Activated CD8-positive, alpha-beta T cell treated with anti-CD3 and anti-CD28 coated beads for 36 hours (primary cell): ENCODE measurements at regions of chr5 and their contacts with region 1.

Region 1: DNA sequence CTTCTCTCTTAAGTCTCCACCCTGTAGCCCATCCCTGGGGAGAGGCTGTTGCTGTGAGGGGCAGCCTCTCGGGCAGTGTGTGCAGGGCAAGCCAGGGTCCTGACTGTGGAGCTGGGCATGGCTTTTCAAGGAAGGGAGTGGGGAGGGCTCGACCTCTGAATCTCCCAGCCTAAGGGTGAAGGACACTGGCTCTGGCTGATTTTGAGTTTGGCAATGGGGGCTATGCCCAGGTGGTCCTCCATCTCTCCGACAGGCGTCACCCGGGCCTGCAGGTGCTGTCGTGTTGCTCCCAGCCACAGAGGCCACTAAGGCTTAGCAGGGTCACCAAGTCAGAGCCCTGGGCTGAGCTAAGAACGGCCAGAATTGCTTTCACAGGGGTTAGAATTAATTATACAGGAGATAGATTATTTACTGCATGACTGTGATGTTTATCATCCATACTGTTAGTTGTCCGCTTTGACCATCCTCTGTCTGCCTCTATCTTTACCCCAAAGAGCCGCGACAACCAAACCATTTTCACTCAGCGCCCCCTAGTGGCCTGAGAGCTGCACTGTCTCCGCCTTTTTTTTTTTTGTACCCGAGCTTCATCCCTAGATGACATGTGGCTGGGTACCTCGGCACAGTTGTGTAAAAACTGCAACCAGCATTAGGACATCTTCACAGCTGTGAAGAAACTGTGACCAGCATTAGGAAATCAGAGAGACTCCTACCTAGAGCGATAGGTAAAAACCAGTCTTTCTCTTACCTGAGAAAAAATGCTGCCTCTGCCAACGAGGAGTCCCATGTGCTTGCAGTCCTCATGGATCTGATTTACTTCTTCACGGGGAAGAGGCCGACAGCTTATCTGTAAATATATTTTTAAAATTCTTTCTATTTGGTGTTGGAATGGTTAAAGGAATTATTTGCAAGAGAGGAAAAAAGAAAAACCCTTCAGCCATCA is 44.5 kb downstream of the AGXT2 start:
- DNase-seq: peak; percentile 73
- ATAC-seq: peak; percentile 77
- H3K4me3 Mint-ChIP-seq: no peak overlapping the region
- H3K27ac Mint-ChIP-seq: no peak overlapping the region
- H3K4me1 Mint-ChIP-seq: no peaks in the 10 kb centered on the region
- H3K27me3 Mint-ChIP-seq: peaks cover 21% of the 10 kb centered on the region
- CTCF ChIP-seq: peak; percentile 92

Region 2: DNA sequence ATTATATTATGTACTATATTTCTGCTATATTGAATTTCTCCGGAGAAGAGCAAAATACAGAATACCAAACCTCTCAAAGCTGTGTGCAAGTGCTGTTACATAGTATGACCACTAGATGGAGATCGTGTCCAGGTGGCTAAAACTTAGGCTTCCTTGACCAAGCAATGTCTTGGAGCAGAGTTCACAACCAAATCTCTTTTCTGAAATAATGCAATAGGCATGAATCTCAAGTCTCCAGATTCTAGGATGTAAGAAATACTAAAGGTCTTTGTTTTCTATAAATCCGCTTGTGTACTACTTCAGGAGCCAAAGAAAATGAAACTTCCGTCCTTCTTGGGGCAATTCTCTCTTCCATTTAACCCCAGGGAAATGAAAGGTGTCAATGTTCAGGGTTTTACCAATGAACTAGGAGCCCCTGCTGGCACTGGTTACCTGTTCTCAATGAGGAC is 528.7 kb before region 1 on chr5:
- CTCF ChIA-PET with region 1: interaction called, 15 read pairs
- POLR2A ChIA-PET with region 1: no interaction called
- intact Hi-C with region 1: no loop called
- DNase-seq: no peak
- ATAC-seq: peak; percentile 79
- H3K4me3 Mint-ChIP-seq: no peak overlapping the region
- H3K27ac Mint-ChIP-seq: no peak overlapping the region
- H3K4me1 Mint-ChIP-seq: no peaks in the 10 kb centered on the region
- H3K27me3 Mint-ChIP-seq: peaks cover 7% of the 10 kb centered on the region
- CTCF ChIP-seq: peak; percentile 92

Region 3: GRCh38 chr5:34499001-34499734 is 504.1 kb before region 1 on chr5:
- CTCF ChIA-PET with region 1: no interaction called
- POLR2A ChIA-PET with region 1: no interaction called
- intact Hi-C with region 1: loop called (anchors 10 kb)
- DNase-seq: peak; percentile 38
- ATAC-seq: peak; percentile 96
- H3K4me3 Mint-ChIP-seq: no peak overlapping the region
- H3K27ac Mint-ChIP-seq: peak overlapping the region; percentile 63
- H3K4me1 Mint-ChIP-seq: peaks cover 12% of the 10 kb centered on the region
- H3K27me3 Mint-ChIP-seq: peaks cover 11% of the 10 kb centered on the region
- CTCF ChIP-seq: no peak

Region 4: GRCh38 chr5:34789021-34789531 is 214.2 kb before region 1 on chr5:
- CTCF ChIA-PET with region 1: no interaction called
- POLR2A ChIA-PET with region 1: no interaction called
- intact Hi-C with region 1: no loop called
- DNase-seq: no peak
- ATAC-seq: no peak
- H3K4me3 Mint-ChIP-seq: no peak overlapping the region
- H3K27ac Mint-ChIP-seq: no peak overlapping the region
- H3K4me1 Mint-ChIP-seq: no peaks in the 10 kb centered on the region
- H3K27me3 Mint-ChIP-seq: peaks cover 4% of the 10 kb centered on the region
- CTCF ChIP-seq: no peak

Region 5: DNA sequence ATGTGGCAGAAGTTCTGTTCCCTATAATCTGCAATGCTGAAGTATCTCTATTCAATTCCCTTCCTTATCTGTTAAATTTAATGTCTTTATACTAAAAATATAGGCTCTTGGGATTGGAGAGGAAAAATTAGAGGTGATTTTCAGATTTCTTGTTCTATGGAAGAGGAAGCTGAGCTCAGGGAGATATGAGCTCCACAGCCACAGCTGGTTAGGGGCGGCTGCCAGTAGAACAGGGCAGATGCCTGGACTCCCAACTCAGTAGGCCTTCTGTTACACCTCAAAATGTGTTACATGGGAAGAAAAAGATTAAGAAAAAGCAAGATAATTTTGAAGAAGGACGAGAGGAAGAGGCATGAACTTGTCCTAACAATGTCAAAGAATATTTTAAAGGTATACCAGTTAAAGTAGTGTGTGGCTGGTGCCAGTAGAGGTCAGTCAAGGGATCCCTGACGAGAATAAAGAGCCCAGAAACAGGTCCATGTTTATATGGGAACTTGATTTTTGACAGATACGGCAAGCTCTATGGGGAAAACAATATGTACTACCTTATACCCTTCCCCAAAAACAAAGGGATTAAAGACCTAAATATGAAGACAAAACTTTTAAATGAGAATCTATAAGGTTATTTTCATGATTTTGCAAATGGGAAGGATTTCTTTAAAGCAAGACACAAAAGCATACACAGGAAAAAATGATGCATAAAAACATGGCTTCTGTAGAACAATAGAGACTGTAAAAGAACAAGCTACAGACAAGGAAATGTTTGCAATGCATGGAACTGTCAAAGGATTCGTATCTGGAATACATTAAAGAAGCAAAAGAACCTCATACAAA is 45.2 kb before region 1 on chr5:
- CTCF ChIA-PET with region 1: interaction called, 41 read pairs
- POLR2A ChIA-PET with region 1: no interaction called
- intact Hi-C with region 1: loop called (anchors 5 kb)
- DNase-seq: peak; percentile 25
- ATAC-seq: peak; percentile 55
- H3K4me3 Mint-ChIP-seq: no peak overlapping the region
- H3K27ac Mint-ChIP-seq: no peak overlapping the region
- H3K4me1 Mint-ChIP-seq: peaks cover 17% of the 10 kb centered on the region
- H3K27me3 Mint-ChIP-seq: no peaks in the 10 kb centered on the region
- CTCF ChIP-seq: peak; percentile 55

Region 6: DNA sequence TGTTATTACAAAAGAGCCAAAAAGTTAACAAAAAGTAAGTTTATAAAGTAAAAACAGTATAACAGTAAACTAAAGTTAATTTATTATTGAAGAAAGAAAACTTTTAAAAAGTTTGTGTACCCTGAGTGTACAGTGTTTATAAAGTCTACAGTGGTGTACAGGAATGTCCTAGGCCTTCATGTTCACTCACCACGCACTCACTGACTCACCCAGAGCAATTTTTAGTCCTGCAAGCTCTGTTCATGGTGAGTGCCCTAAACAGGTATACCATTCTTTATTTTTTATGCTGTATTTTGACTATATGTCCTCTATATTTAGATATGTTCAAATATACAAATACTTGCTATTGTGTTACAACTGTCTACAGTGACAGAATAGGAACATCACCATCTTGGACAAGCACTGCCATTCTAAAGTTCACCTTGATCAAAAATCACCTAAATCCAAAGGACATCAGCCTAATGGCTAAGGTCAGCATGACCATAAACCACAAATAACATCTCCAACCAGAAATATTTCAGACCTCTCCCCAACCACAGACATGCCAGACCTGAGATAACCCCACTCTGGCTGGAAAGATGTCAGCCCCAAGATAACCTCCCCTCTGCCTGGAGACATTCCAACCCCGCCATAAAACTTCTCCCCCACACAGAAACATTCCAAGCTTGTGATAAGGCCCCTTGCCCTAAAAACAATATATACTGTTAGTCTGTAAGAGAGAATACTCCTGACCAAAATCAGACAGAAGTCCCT is 11.6 kb before region 1 on chr5:
- CTCF ChIA-PET with region 1: interaction called, 31 read pairs
- POLR2A ChIA-PET with region 1: no interaction called
- intact Hi-C with region 1: no loop called
- DNase-seq: no peak
- ATAC-seq: no peak
- H3K4me3 Mint-ChIP-seq: no peak overlapping the region
- H3K27ac Mint-ChIP-seq: no peak overlapping the region
- H3K4me1 Mint-ChIP-seq: no peaks in the 10 kb centered on the region
- H3K27me3 Mint-ChIP-seq: peaks cover 27% of the 10 kb centered on the region
- CTCF ChIP-seq: no peak

Region 7: GRCh38 chr5:35016174-35017051 is 13.1 kb after region 1 on chr5:
- CTCF ChIA-PET with region 1: interaction called, 10 read pairs
- POLR2A ChIA-PET with region 1: no interaction called
- intact Hi-C with region 1: no loop called
- DNase-seq: no peak
- ATAC-seq: no peak
- H3K4me3 Mint-ChIP-seq: no peak overlapping the region
- H3K27ac Mint-ChIP-seq: no peak overlapping the region
- H3K4me1 Mint-ChIP-seq: no peaks in the 10 kb centered on the region
- H3K27me3 Mint-ChIP-seq: peaks cover 17% of the 10 kb centered on the region
- CTCF ChIP-seq: no peak